ENCODE measurements at regions of chr5 and their contacts with region 1.

Region 1: GRCh38 chr5:139787568-139788293 is 7.9 kb upstream of the PSD2 start:
- DNase-seq: peak; percentile 98
- H3K4me3 ChIP-seq: peak overlapping the region; percentile 56 to 80
- H3K27ac ChIP-seq: no peak overlapping the region; a peak in 1 of 4 replicates
- H3K4me1 ChIP-seq: peaks cover 0 to 3% of the 10 kb centered on the region in 2 experiments; a peak in 1 of 4 replicates
- H3K27me3 ChIP-seq: no peaks in the 10 kb centered on the region; the same call in 1 of the 2 replicates
- CTCF ChIP-seq: peak; percentile 87
- EP300 ChIP-seq: no peak
- RAD21 ChIP-seq: peak; percentile 96

Region 2: GRCh38 chr5:139774980-139775661 is 12.6 kb before region 1 on chr5:
- CTCF ChIA-PET with region 1: interaction called, 92 read pairs
- POLR2A ChIA-PET with region 1: interaction called, 3 read pairs
- DNase-seq: peak; percentile 94
- H3K4me3 ChIP-seq: peak overlapping the region in 1 of 2 experiments; percentile 4; a peak in 1 of 4 replicates
- H3K27ac ChIP-seq: no peak overlapping the region
- H3K4me1 ChIP-seq: peaks cover 0 to 2% of the 10 kb centered on the region in 2 experiments; a peak in 1 of 4 replicates
- H3K27me3 ChIP-seq: no peaks in the 10 kb centered on the region; the same call in 1 of the 2 replicates
- CTCF ChIP-seq: peak; percentile 86
- EP300 ChIP-seq: no peak
- RAD21 ChIP-seq: peak; percentile 53

Region 3: GRCh38 chr5:139837631-139838422 is 50.1 kb after region 1 on chr5:
- CTCF ChIA-PET with region 1: interaction called, 92 read pairs
- POLR2A ChIA-PET with region 1: no interaction called
- DNase-seq: no peak
- H3K4me3 ChIP-seq: no peak overlapping the region
- H3K27ac ChIP-seq: no peak overlapping the region
- H3K4me1 ChIP-seq: no peaks in the 10 kb centered on the region
- H3K27me3 ChIP-seq: no peaks in the 10 kb centered on the region; the same call in 1 of the 2 replicates
- CTCF ChIP-seq: no peak
- EP300 ChIP-seq: no peak
- RAD21 ChIP-seq: no peak

Region 4: GRCh38 chr5:139872052-139872766 is 84.5 kb after region 1 on chr5:
- CTCF ChIA-PET with region 1: interaction called, 225 read pairs
- POLR2A ChIA-PET with region 1: no interaction called
- DNase-seq: no peak
- H3K4me3 ChIP-seq: no peak overlapping the region
- H3K27ac ChIP-seq: no peak overlapping the region
- H3K4me1 ChIP-seq: peaks cover 0 to 15% of the 10 kb centered on the region in 2 experiments; a peak in 1 of 4 replicates
- H3K27me3 ChIP-seq: no peaks in the 10 kb centered on the region
- CTCF ChIP-seq: peak; percentile 24; the same call in 1 of the 2 replicates
- EP300 ChIP-seq: no peak
- RAD21 ChIP-seq: 0 out of 2 replicates have a peak, but pooled peaks have one; percentile 13

Region 5: GRCh38 chr5:139911425-139912120 is 123.8 kb after region 1 on chr5:
- CTCF ChIA-PET with region 1: interaction called, 30 read pairs
- POLR2A ChIA-PET with region 1: no interaction called
- DNase-seq: no peak
- H3K4me3 ChIP-seq: no peak overlapping the region
- H3K27ac ChIP-seq: no peak overlapping the region
- H3K4me1 ChIP-seq: peaks cover 0 to 48% of the 10 kb centered on the region in 2 experiments; a peak in 2 of 4 replicates
- H3K27me3 ChIP-seq: no peaks in the 10 kb centered on the region
- CTCF ChIP-seq: no peak
- EP300 ChIP-seq: no peak
- RAD21 ChIP-seq: no peak

Region 6: DNA sequence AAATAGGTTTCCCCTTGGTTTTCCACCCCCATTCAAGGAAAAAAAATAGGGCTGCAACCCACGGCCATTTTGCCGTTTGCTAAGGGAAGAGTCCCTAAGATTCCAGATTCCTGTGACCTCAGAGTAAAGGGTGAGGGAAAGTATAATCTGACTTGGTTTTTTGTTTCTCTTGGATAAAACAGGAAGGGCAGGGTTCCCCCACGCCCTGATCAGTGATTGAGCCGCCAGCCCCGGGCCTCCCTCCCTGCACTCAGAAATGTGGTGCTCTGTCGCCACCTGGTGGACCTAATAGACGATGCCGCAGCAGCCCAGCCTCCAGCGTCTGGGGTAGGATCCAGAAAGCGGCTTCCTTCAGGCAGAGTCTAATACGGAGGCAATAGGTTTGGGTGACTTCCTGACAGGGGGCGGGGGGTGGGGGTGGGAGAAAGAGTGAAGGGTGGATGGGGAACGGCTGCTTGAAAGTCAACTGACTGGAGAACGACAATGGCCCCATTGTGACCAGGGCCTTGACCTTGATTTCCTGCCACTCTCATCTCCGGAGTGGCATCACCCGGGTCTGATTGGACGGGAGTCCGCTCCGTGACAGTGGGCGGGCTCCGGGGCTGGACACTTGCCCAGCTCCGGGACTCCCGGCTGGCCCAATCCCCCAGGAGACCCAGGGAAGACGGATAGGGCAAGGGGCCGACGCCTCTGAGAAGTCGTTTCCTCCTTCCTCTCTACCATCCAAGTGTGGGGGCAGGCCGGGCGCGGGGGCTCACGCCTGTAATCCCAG is 369.5 kb after region 1 on chr5:
- CTCF ChIA-PET with region 1: interaction called, 19 read pairs
- POLR2A ChIA-PET with region 1: no interaction called
- DNase-seq: peak; percentile 92
- H3K4me3 ChIP-seq: peak overlapping the region; percentile 35 to 46
- H3K27ac ChIP-seq: no peak overlapping the region; a peak in 1 of 4 replicates
- H3K4me1 ChIP-seq: peaks cover 0 to 5% of the 10 kb centered on the region in 2 experiments; a peak in 1 of 4 replicates
- H3K27me3 ChIP-seq: no peaks in the 10 kb centered on the region
- CTCF ChIP-seq: peak; percentile 92
- EP300 ChIP-seq: no peak
- RAD21 ChIP-seq: peak; percentile 94